ENCODE measurements at regions of chr10 and their contacts with region 1.

Region 1: GRCh38 chr10:76336213-76336963 is 905.0 kb downstream of the LRMDA start:
- DNase-seq: no peak
- ATAC-seq: no peak
- H3K4me3 ChIP-seq: no peak overlapping the region
- H3K27ac ChIP-seq: no peak overlapping the region
- H3K4me1 ChIP-seq: peaks cover 16% of the 10 kb centered on the region
- H3K27me3 ChIP-seq: no peaks in the 10 kb centered on the region
- CTCF ChIP-seq: no peak

Region 2: DNA sequence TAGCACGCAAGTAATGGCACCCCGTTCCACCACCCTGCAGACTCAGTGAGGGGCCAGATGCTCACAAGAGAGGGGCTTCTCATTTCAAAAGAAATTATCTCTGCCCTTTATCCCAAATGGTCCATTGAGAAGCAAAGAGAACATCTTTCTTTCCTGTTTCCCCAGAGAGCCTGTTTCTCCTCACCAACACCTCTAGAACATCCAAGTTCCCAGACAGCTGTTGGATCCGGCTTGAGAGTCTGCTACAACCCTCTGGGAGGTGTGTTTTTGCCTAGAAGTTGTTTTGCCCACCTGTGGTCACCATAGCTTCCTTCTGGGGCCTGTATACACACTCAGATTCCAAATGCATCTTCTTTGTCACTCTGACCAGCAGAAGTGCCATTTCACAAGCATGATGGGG is 267.5 kb before region 1 on chr10:
- CTCF ChIA-PET with region 1: interaction called, 11 read pairs
- POLR2A ChIA-PET with region 1: no interaction called
- intact Hi-C with region 1: no loop called
- DNase-seq: no peak
- ATAC-seq: no peak
- H3K4me3 ChIP-seq: no peak overlapping the region
- H3K27ac ChIP-seq: no peak overlapping the region
- H3K4me1 ChIP-seq: peaks cover 4% of the 10 kb centered on the region; the same call in 1 of the 2 replicates
- H3K27me3 ChIP-seq: peaks cover 25% of the 10 kb centered on the region
- CTCF ChIP-seq: no peak

Region 3: GRCh38 chr10:76318171-76318570 is 18.2 kb before region 1 on chr10:
- CTCF ChIA-PET with region 1: no interaction called
- POLR2A ChIA-PET with region 1: no interaction called
- intact Hi-C with region 1: loop called (anchors 1 kb)
- DNase-seq: no peak
- ATAC-seq: peak; percentile 69
- H3K4me3 ChIP-seq: no peak overlapping the region
- H3K27ac ChIP-seq: no peak overlapping the region
- H3K4me1 ChIP-seq: peaks cover 6% of the 10 kb centered on the region; the same call in 1 of the 2 replicates
- H3K27me3 ChIP-seq: no peaks in the 10 kb centered on the region
- CTCF ChIP-seq: no peak

Region 4: DNA sequence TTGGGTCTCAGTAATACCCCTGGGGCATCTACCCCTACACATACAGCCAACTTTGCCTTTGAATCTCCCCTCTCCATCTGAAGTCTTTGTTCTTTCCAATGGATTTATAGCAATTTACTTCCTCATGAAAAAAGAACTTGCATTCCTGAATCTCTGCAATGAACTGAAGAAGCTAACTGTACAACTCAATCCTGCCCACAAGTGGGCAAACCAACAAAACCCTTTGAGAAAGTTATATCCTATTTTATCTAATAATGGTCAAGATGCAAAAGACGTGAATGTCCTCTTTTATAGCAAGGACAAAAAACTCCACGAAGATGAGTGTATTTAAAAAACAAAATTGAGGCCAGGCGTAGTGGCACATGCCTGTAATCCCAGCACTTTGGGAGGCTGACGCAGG is 86.4 kb after region 1 on chr10:
- CTCF ChIA-PET with region 1: interaction called, 5 read pairs
- POLR2A ChIA-PET with region 1: no interaction called
- intact Hi-C with region 1: loop called (anchors 2 kb)
- DNase-seq: peak; percentile 39
- ATAC-seq: peak; percentile 61
- H3K4me3 ChIP-seq: no peak overlapping the region
- H3K27ac ChIP-seq: no peak overlapping the region
- H3K4me1 ChIP-seq: no peaks in the 10 kb centered on the region
- H3K27me3 ChIP-seq: no peaks in the 10 kb centered on the region
- CTCF ChIP-seq: peak; percentile 52

Region 5: DNA sequence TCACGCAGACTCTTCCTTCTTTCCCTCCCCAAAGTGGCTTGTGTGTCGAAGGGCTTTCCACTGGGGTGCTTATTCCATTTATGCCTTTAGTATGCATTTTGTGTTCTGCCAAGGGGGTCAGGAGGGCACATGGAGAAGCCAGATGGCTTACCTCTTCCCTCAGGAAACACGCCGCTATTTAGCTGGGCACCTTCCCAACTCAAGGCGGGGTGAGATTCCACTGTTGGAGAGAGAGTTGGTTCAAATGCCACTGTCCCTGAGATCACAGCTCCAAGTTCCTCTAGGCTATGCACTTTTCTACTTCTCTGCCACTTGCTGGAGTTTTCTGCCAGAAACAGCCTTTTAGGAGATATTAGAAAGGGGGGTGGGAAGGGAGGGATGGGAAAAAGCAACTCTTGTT is 186.9 kb after region 1 on chr10:
- CTCF ChIA-PET with region 1: no interaction called
- POLR2A ChIA-PET with region 1: no interaction called
- intact Hi-C with region 1: no loop called
- DNase-seq: no peak
- ATAC-seq: no peak
- H3K4me3 ChIP-seq: no peak overlapping the region
- H3K27ac ChIP-seq: no peak overlapping the region
- H3K4me1 ChIP-seq: no peaks in the 10 kb centered on the region
- H3K27me3 ChIP-seq: peaks cover 24% of the 10 kb centered on the region
- CTCF ChIP-seq: no peak

Region 6: GRCh38 chr10:76984559-76985443 is 648.4 kb after region 1 on chr10:
- CTCF ChIA-PET with region 1: no interaction called
- POLR2A ChIA-PET with region 1: no interaction called
- intact Hi-C with region 1: loop called (anchors 5 kb)
- DNase-seq: peak; percentile 100
- ATAC-seq: peak; percentile 95
- H3K4me3 ChIP-seq: no peak overlapping the region
- H3K27ac ChIP-seq: no peak overlapping the region
- H3K4me1 ChIP-seq: peaks cover 18% of the 10 kb centered on the region
- H3K27me3 ChIP-seq: no peaks in the 10 kb centered on the region
- CTCF ChIP-seq: peak; percentile 100